GM10248 (cell line): ENCODE measurements at regions of chr2 and their contacts with region 1.

Region 1: GRCh38 chr2:237512774-237513466 is 25.9 kb downstream of the MLPH start:
- DNase-seq: peak; percentile 88
- CTCF ChIP-seq: peak; percentile 88

Region 2: GRCh38 chr2:237500681-237501424 is 12.1 kb before region 1 on chr2:
- CTCF ChIA-PET with region 1: interaction called, 16 read pairs
- POLR2A ChIA-PET with region 1: no interaction called
- DNase-seq: no peak
- CTCF ChIP-seq: no peak

Region 3: DNA sequence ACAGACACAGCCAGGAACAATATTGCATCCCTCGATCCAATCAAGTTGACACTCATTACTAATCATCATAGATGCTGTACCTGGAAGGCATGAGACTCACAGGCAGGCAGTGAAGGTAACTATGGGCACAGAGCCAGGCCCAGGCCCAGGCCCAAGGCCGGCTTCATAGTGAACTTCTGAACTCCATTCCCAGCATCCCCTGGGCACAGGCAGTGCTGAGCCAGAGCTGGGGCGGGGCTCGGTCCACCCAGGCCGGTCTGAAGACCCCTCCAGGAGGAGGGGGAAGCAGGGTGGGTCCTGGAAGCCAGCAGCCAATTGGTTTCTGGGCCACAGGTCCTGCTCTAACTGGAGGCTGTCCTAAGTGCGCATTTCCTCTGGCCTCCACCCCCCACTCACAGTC is 11.7 kb after region 1 on chr2:
- CTCF ChIA-PET with region 1: interaction called, 21 read pairs
- POLR2A ChIA-PET with region 1: no interaction called
- DNase-seq: no peak
- CTCF ChIP-seq: no peak

Region 4: DNA sequence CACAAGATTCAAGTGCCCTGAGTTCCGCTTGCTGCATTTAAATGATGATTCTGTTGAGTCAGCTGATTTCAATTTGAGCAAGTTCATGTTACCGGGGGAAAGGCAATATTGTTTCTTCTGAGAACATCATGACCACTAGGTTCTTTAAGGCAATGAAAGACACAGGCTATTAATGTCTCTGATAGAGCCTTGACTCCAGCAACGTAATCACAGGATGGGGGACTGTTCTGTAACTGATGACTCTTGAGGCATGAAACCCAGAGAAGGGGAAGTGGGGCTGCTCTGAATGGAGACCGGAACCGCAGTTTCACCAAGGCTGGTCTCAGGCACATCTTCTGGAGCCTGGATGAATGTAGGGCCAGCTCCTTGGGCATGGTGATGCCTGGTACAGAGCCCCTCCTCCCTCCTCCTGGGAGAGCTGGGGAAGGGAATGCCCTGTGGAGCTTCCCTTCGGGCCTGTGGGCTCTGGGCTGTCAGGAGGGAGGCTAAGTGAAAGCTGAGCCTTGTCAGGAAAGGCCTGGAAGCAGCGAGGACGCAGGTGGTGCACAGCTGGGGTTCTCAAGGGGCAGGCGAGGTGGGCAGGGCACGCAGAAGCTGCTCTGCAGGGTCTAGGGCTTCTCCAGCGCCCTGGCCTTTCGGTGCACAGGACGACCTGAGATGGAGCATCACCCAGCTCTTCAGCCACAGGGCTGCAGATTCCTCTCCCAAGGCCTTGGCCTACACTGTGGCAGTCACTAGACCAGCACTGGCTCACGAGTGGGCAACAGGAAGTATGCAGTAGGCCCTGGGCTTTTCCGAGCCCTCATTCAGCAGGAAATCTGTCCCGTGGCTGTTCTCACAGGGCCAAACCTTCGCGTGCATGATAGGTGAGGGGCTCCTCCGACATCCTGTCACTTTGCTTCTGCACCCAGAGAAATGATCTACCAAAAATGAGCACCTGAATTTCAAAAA is 16.8 kb after region 1 on chr2:
- CTCF ChIA-PET with region 1: interaction called, 36 read pairs
- POLR2A ChIA-PET with region 1: no interaction called
- DNase-seq: peak; percentile 77
- CTCF ChIP-seq: no peak

Region 5: DNA sequence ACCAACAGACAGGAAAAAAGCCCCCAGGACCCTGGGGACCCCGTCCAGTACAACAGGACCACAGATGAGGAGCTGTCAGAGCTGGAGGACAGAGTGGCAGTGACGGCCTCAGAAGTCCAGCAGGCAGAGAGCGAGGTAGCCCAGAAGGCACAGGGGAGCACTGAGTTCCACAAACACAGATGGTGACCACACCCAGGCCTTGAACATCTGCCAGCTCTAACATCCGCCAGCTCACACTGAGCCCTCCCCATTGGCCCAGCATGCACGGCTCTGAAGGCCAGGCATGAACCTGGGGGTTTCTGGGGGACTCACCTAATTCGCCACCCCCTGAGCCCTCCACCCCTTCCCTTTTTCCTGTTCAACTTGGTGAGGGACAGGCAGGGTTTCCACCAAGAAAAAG is 27.9 kb after region 1 on chr2:
- CTCF ChIA-PET with region 1: interaction called, 36 read pairs
- POLR2A ChIA-PET with region 1: no interaction called
- DNase-seq: no peak
- CTCF ChIP-seq: no peak

Region 6: DNA sequence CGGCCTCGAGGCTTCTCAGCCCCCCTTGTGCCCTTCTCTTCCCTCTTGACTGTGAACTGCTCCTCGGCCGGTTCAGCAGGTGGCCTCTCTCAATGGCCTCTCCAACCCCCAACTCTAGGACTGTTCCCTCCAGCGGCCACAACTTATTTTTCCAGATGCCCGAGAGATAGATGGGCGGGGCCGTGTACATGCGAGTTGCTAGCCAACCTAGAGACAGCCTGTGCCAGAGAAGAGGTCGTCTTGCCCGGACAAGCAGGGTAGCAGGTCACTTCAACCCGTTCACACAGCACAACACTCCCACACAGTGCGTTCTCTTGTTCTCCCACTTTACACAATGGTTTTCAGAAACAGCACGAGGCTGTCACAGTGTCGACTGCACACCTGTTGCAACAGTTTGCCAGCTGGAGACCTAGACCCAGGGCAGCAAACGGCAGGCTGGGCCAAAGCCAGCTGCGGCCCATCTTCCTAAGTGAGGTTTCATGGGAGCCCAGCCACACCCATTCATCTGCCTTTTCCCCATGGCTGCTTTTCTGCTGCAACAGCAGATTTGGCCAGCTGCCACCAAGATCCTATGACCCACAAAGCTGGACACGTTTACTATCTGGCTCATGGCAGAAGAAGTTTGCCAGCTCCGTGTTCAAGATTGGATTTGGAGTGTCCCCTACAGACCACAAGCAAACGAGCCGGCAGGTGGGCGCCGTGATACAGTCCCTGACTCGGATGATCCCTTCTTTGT is 46.2 kb after region 1 on chr2:
- CTCF ChIA-PET with region 1: interaction called, 22 read pairs
- POLR2A ChIA-PET with region 1: no interaction called
- DNase-seq: no peak
- CTCF ChIP-seq: no peak

Region 7: DNA sequence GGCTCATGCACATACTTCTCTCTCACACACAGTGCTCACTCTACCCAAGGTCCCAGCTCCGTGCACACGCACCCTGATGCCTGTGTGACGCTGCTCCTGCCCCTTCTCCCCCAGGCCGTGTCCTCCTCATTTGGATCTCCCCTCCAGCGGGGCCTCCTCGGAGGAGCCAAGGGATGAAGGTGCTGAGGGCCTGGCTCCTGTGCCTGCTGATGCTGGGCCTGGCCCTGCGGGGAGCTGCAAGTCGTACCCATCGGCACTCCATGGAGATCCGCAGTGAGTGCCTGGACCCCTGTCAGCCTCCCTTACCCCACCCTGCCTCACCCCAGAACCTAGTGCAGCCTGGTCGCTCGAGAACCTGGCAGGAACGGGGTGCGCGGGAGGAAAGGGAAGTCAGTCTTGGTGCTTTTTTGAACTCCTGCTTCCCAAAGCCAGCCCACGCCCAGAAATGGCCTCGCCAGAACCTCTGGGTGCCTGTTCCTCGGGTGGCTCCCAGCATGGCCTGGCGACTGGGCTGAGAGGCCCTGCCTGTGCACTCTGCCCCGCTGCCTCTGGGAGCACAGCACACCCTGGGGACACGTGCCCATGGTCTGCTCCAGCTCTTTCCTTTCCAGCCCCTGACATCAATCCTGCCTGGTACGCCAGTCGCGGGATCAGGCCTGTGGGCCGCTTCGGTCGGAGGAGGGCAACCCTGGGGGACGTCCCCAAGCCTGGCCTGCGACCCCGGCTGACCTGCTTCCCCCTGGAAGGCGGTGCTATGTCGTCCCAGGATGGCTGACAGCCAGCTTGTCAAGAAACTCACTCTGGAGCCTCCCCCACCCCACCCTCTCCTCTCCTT is 53.7 kb after region 1 on chr2 and contains the start of gene PRLH:
- CTCF ChIA-PET with region 1: interaction called, 317 read pairs
- POLR2A ChIA-PET with region 1: no interaction called
- DNase-seq: no peak
- CTCF ChIP-seq: no peak